ENCODE measurements at regions of chr1 and their contacts with region 1.

Region 1: DNA sequence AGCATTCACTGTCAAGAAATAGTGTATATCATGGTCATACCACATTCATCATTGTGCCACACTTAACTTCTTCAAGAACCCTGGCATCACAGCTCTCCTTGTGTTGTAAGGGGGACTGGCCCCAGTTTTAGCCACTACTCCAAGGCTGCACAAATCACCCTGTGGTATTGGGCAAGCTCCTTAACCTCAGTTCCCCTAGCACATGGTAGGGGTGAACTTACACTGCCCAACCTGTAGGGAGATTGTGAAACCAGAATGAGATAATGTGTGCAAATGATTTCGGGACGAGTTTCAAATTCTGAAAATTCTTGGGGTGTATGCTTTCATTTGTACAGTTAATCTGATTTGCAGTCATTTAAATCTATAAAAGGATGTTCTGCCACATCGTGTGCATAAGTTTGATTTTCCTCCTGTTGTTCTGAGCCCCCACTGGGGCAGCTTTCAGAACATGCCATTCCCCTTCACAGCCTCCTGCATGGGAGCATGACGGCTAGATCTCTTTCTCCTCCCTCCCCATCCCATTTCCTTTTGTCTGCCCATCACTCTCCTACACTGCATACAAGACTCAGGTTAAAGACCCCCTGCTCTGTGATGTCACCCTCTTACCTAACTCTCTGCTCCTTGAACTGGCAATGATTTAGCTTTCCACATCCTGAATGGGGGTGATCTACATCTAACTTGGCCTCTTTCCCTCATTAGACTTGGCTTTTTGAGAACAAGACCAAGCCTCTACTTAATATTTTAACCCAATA is 290.3 kb downstream of the CHRM3 start:
- DNase-seq: no peak
- H3K4me3 ChIP-seq: no peak overlapping the region
- H3K27ac ChIP-seq: no peak overlapping the region
- H3K4me1 ChIP-seq: peaks cover 0 to 11% (median 0%) of the 10 kb centered on the region in 4 experiments; a peak in 2 of 7 replicates
- H3K27me3 ChIP-seq: no peaks in the 10 kb centered on the region; a peak in 1 of 7 replicates
- CTCF ChIP-seq: peak in 1 of 3 experiments; percentile 34; a peak in 1 of 4 replicates
- EP300 ChIP-seq: no peak
- POLR2A ChIP-seq: no peak
- RAD21 ChIP-seq: peak in 1 of 2 experiments; percentile 12; a peak in 1 of 4 replicates

Region 2: DNA sequence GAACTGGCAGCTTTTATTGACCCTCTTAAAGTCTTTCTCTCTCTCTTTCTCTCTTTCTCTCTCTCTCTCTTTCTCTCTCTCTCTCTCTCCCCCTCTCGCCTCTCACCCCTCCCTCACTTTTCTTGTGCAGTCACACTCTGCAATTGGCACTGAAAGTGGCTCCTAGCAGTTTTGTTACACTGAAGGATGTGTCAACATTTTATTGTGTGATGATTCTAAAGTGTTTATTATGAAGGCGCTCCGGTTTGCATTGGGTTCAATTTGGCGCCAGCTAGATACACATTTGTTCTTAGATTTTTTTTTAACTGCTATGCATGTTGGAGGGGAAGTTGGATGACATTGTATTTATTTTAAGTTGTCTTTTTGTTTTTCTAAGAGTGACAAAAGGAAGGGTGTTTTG is 354.3 kb before region 1 on chr1:
- CTCF ChIA-PET with region 1: no interaction called
- POLR2A ChIA-PET with region 1: no interaction called
- DNase-seq: no peak
- H3K4me3 ChIP-seq: no peak overlapping the region
- H3K27ac ChIP-seq: no peak overlapping the region
- H3K4me1 ChIP-seq: no peaks in the 10 kb centered on the region; a peak in 1 of 7 replicates
- H3K27me3 ChIP-seq: no peaks in the 10 kb centered on the region
- CTCF ChIP-seq: no peak
- EP300 ChIP-seq: no peak
- POLR2A ChIP-seq: no peak
- RAD21 ChIP-seq: no peak

Region 3: DNA sequence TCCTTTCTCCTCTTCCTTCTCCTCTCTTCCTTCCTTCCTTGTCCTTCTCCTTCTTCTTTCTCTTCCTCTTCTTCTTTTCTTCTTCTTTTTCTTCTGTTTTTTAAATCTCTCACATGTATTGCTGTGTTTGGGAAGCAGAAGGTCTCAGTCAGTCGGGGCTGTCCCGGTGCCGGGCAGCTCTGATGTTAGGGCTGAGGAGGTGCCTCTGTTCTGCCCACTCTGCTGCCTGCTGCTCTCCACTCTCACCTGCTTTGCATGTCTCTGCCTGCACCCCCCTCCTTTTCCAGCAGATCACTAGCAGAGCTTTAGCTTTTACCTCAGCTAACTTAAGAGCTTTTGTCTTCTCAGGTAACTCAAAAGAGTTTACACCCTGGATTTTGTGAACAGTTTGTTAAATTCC is 13.7 kb before region 1 on chr1:
- CTCF ChIA-PET with region 1: interaction called, 18 read pairs
- POLR2A ChIA-PET with region 1: no interaction called
- DNase-seq: no peak
- H3K4me3 ChIP-seq: no peak overlapping the region
- H3K27ac ChIP-seq: no peak overlapping the region
- H3K4me1 ChIP-seq: no peaks in the 10 kb centered on the region; a peak in 1 of 7 replicates
- H3K27me3 ChIP-seq: no peaks in the 10 kb centered on the region
- CTCF ChIP-seq: no peak
- EP300 ChIP-seq: no peak
- POLR2A ChIP-seq: no peak
- RAD21 ChIP-seq: no peak

Region 4: DNA sequence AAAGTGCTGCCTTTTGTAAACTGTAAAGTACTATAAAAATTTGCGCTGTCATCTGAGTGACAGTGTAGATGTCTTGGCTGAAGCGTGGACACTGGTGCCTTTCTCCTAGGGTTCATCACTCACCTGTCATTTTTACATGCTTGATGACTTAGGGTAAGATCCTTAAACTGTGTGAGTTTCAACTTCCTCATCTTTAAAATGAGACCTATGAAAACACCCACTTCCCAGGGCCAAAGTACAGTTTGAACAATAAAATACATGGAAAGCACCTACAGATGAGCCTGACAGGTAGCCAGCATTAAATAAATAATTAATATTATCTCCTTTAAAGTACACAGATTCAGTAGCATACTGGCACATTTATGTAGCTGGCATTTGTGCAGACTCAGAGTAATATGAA is 19.6 kb after region 1 on chr1:
- CTCF ChIA-PET with region 1: no interaction called
- POLR2A ChIA-PET with region 1: no interaction called
- DNase-seq: no peak
- H3K4me3 ChIP-seq: no peak overlapping the region
- H3K27ac ChIP-seq: no peak overlapping the region
- H3K4me1 ChIP-seq: no peaks in the 10 kb centered on the region
- H3K27me3 ChIP-seq: no peaks in the 10 kb centered on the region
- CTCF ChIP-seq: no peak
- EP300 ChIP-seq: no peak
- POLR2A ChIP-seq: no peak
- RAD21 ChIP-seq: no peak